Panc1 (cell line): ENCODE measurements at regions of chr19 and their contacts with region 1.

Region 1: GRCh38 chr19:18765224-18765623 is 25.9 kb downstream of the COMP start:
- DNase-seq: no peak
- ATAC-seq: no peak
- H3K4me3 ChIP-seq: no peak overlapping the region
- H3K27ac ChIP-seq: no peak overlapping the region
- H3K4me1 ChIP-seq: 0 out of 2 replicates have a peak, but pooled peaks cover 3% of the 10 kb centered on the region
- H3K27me3 ChIP-seq: no peaks in the 10 kb centered on the region
- CTCF ChIP-seq: no peak

Region 2: DNA sequence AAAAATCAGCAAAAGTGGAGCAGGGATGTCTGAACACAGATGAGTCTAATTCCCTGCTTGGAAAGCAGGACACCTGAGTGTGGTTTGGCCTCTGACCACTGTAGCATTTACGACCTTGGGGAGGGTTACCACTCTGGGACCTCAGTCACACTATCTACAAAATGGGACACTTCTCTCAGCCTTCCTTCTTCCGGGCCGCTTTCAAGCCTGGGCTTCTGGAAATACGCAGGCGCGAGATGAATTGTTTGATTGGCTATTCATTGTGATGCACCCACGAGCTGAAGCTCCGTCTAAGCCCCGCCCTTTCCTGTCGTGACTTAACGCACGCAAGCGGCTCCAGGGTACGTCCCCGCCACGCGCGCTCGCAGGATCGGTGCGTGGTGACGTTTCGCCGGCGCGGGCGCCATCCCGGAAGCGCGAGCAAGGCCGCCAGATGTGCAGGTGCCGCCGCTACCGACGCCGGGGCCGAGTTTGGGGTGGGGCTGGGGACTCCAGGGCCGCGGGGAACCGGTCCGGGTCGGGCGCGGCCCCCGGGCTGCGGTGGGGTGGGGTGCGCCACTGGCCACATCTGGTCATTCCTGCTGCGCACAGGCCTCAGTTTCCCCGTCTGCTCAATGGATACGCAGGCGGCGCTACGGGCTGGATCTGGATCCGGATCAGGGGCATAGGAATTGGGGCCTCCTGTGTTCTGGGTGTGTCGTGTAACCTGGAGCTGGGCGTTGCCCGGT is 207.6 kb before region 1 on chr19 and contains the start of gene KXD1:
- CTCF ChIA-PET with region 1: no interaction called
- POLR2A ChIA-PET with region 1: interaction called, 14 read pairs
- in situ Hi-C with region 1: no loop called
- intact Hi-C with region 1: no loop called
- DNase-seq: peak; percentile 87
- ATAC-seq: peak; percentile 99
- H3K4me3 ChIP-seq: peak within 1 kb of the TSS; percentile 89 to 94
- H3K27ac ChIP-seq: peak within 1 kb of the TSS; percentile 96
- H3K4me1 ChIP-seq: 0 out of 2 replicates have a peak, but pooled peaks cover 5% of the 10 kb centered on the region
- H3K27me3 ChIP-seq: no peaks in the 10 kb centered on the region
- CTCF ChIP-seq: no peak
- total RNA-seq, gene KXD1: 106 TPM

Region 3: DNA sequence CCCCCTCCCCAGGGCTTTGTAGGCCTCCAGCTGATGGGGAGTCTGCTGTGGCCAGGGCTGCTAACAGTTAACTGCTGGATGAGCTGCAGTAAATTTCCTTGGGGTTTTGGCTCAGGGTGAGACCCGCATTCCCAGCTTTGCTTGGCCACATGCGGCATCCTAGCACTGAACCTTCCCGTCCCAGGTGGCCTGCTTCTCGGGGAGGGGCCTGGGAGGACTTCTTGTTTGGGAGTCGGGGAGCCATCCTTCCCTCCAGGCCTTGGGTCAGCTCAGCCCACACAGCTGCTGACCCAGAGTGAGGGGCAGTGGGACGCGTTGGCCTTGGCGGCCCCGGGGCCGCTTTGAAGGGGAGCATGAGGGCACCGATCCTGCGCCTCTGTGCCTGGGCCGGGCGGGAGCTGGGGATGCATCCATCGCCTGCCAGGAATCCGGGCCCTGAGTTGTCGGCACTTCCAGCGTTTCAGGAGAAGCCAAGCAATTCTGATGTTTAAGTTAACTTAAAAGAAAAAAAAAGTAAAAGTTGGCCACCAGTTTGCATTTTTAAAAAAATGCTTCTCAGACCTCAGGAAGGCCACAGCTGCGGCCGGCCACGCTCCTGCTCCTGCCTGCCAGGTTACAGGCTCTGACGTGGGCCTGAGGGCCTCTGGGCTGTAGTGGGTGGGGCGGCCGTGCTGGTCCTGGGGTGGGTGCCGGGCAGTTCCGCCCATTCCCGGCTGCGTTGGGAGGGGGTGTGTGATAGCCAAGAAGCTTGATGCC is 54.0 kb before region 1 on chr19:
- CTCF ChIA-PET with region 1: no interaction called
- POLR2A ChIA-PET with region 1: no interaction called
- in situ Hi-C with region 1: no loop called
- intact Hi-C with region 1: no loop called
- DNase-seq: no peak
- ATAC-seq: no peak
- H3K4me3 ChIP-seq: no peak overlapping the region
- H3K27ac ChIP-seq: no peak overlapping the region
- H3K4me1 ChIP-seq: no peaks in the 10 kb centered on the region
- H3K27me3 ChIP-seq: no peaks in the 10 kb centered on the region
- CTCF ChIP-seq: no peak